IMR-90 (cell line): ENCODE measurements at regions of chr20 and their contacts with region 1.

Region 1: GRCh38 chr20:45971675-45972499 is at the start of gene ZNF335:
- DNase-seq: peak; percentile 96
- ATAC-seq: peak; percentile 89
- H3K4me3 ChIP-seq: peak within 1 kb of the TSS; percentile 67
- H3K27ac ChIP-seq: peak within 1 kb of the TSS; percentile 97
- H3K4me1 ChIP-seq: peaks cover 13% of the 10 kb centered on the region
- H3K27me3 ChIP-seq: no peaks in the 10 kb centered on the region
- CTCF ChIP-seq: peak; percentile 17; the same call in 1 of the 2 replicates
- POLR2A ChIP-seq: peak; percentile 96
- RAD21 ChIP-seq: no peak
- total RNA-seq, gene ZNF335: 11.8 and 12.5 TPM in 2 replicates

Region 2: GRCh38 chr20:45842169-45842812 is 129.6 kb before region 1 on chr20:
- CTCF ChIA-PET with region 1: no interaction called
- POLR2A ChIA-PET with region 1: no interaction called
- dilution Hi-C with region 1: no loop called
- in situ Hi-C with region 1: no loop called
- intact Hi-C with region 1: no loop called
- DNase-seq: peak; percentile 59
- ATAC-seq: peak; percentile 74
- H3K4me3 ChIP-seq: no peak overlapping the region
- H3K27ac ChIP-seq: no peak overlapping the region; the same call in 1 of the 2 replicates
- H3K4me1 ChIP-seq: no peaks in the 10 kb centered on the region
- H3K27me3 ChIP-seq: no peaks in the 10 kb centered on the region
- CTCF ChIP-seq: no peak
- POLR2A ChIP-seq: no peak
- RAD21 ChIP-seq: no peak

Region 3: DNA sequence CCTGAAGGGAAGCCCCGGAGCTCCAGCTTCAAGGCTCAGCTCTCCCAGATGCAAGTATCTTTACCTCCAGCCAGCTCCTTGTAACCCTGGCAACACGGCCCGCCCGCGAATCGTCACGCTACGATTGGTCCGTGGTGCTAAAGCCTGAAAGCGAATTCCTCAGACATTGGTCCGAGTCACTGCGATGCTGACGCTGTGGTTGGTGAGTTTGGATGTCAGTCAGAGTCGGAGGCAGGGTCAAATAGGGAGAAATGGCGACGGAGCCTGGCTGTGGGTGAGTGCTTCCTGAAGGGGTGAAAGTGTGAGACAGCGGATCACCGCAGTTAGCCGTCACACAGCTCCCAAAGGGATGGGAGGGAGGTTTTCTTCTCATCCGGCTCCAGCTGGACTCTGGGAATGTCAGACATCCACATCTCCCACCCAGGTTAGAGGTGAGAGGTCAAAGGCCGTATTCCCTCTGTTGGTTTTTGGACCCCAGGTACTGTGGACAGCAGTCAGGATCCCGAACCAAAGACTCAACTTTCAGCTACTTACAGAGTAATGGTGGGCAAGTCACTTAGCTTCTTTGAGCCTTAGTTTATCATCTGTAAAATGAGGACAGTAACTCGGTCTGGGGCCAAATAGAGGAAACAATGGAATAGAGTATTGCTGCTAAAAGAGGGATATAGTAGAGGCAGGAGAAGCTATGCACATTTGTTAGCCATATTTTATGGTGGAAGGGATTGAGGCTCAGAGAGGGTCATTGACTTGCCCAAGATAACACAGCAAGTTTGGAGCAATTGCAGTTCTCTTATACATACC is 90.7 kb before region 1 on chr20 and contains the start of gene ZSWIM1:
- CTCF ChIA-PET with region 1: no interaction called
- POLR2A ChIA-PET with region 1: no interaction called
- dilution Hi-C with region 1: no loop called
- in situ Hi-C with region 1: no loop called
- intact Hi-C with region 1: no loop called
- DNase-seq: peak; percentile 99
- ATAC-seq: peak; percentile 98
- H3K4me3 ChIP-seq: peak within 1 kb of the TSS; percentile 52
- H3K27ac ChIP-seq: peak within 1 kb of the TSS; percentile 72
- H3K4me1 ChIP-seq: peaks cover 2% of the 10 kb centered on the region; the same call in 1 of the 2 replicates
- H3K27me3 ChIP-seq: no peaks in the 10 kb centered on the region
- CTCF ChIP-seq: no peak
- POLR2A ChIP-seq: peak; percentile 92
- RAD21 ChIP-seq: no peak
- total RNA-seq, gene ZSWIM1: 7.8 and 10.0 TPM in 2 replicates

Region 4: DNA sequence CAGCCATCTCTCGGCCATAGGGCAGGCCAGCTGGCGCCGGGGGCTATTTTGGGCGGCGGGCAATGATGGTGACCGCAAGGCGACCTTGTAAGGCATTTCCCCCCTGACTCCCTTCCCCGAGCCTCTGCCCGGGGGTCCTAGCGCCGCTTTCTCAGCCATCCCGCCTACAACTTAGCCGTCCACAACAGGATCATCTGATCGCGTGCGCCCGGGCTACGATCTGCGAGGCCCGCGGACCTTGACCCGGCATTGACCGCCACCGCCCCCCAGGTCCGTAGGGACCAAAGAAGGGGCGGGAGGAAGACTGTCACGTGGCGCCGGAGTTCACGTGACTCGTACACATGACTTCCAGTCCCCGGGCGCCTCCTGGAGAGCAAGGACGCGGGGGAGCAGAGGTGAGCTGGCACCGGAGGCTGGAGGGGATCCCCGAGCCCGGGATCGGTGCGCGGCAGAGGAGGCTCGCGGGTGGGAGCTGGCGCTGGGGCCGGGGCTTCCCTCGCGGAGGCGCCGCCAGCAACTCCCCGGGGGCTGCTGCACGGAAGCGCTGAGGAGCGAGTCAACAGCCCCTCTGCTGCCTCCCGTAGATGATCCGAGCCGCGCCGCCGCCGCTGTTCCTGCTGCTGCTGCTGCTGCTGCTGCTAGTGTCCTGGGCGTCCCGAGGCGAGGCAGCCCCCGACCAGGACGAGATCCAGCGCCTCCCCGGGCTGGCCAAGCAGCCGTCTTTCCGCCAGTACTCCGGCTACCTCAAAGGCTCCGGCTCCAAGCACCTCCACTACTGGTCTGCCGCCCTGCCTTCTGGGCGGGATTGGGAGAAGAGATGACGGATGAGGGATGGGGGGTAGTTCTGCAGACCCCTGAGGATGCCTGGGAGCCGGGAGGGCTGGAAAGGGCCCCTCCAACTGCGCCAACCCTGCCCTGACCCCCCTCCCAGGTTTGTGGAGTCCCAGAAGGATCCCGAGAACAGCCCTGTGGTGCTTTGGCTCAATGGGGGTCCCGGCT is 80.6 kb before region 1 on chr20 and contains the starts of genes CTSA and NEURL2:
- CTCF ChIA-PET with region 1: no interaction called
- POLR2A ChIA-PET with region 1: no interaction called
- dilution Hi-C with region 1: no loop called
- in situ Hi-C with region 1: no loop called
- intact Hi-C with region 1: loop called (anchors 5 kb)
- DNase-seq: peak; percentile 92
- ATAC-seq: peak; percentile 73
- H3K4me3 ChIP-seq: peak within 1 kb of the TSS; percentile 74
- H3K27ac ChIP-seq: peak within 1 kb of the TSS; percentile 63
- H3K4me1 ChIP-seq: peaks cover 3% of the 10 kb centered on the region; the same call in 1 of the 2 replicates
- H3K27me3 ChIP-seq: no peaks in the 10 kb centered on the region
- CTCF ChIP-seq: no peak
- POLR2A ChIP-seq: no peak; the same call in none of the 2 replicates
- RAD21 ChIP-seq: no peak
- total RNA-seq, gene CTSA: 19.0 and 30.3 TPM in 2 replicates
- total RNA-seq, gene NEURL2: 0.56 and 1.1 TPM in 2 replicates

Region 5: DNA sequence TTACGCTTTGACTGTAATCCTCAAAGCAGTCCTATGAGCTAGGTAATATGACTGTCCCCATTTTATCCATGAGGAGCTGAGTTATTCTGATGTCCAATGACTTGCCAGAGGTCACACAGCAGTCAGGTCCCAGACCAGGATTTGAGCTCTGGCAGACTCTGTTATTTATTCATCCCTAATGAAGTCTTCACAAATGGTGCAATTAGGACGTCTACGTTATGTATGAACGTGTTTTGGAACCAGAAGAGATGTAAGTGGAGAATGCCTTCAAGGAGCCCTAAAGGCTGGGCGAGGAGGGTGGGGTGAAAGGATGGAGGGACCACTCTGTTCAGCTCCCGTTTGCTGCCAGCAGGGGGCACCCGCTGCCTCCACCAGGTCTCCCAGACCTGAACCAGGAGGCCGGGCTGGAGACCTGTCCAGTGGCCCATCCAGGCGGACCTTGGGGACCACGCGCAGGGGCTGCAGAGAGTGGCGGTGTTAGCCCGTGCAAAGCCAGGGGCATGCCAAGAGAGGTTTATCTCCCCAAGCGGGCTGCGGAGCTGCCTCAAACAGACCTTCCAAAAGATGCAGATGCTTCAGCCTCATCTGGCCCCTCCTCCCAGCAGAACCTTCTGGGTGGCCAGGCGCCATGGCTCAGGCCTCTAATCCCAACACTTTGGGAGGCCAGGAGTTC is 15.4 kb after region 1 on chr20:
- CTCF ChIA-PET with region 1: interaction called, 13 read pairs
- POLR2A ChIA-PET with region 1: no interaction called
- dilution Hi-C with region 1: no loop called
- in situ Hi-C with region 1: no loop called
- intact Hi-C with region 1: no loop called
- DNase-seq: peak; percentile 45
- ATAC-seq: peak; percentile 98
- H3K4me3 ChIP-seq: no peak overlapping the region
- H3K27ac ChIP-seq: no peak overlapping the region
- H3K4me1 ChIP-seq: no peaks in the 10 kb centered on the region
- H3K27me3 ChIP-seq: peaks cover 12% of the 10 kb centered on the region
- CTCF ChIP-seq: peak; percentile 77
- POLR2A ChIP-seq: no peak
- RAD21 ChIP-seq: peak; percentile 76

Region 6: GRCh38 chr20:46089417-46090388 is 117.8 kb after region 1 on chr20 and contains the start of gene NCOA5:
- CTCF ChIA-PET with region 1: interaction called, 3 read pairs
- POLR2A ChIA-PET with region 1: no interaction called
- dilution Hi-C with region 1: no loop called
- in situ Hi-C with region 1: no loop called
- intact Hi-C with region 1: loop called (anchors 5 kb)
- DNase-seq: peak; percentile 95
- ATAC-seq: peak; percentile 94
- H3K4me3 ChIP-seq: peak within 1 kb of the TSS; percentile 91
- H3K27ac ChIP-seq: peak within 1 kb of the TSS; percentile 97
- H3K4me1 ChIP-seq: peaks cover 7% of the 10 kb centered on the region
- H3K27me3 ChIP-seq: no peaks in the 10 kb centered on the region
- CTCF ChIP-seq: peak; percentile 44
- POLR2A ChIP-seq: peak; percentile 94
- RAD21 ChIP-seq: no peak
- total RNA-seq, gene NCOA5: 20.6 and 22.5 TPM in 2 replicates

Region 7: DNA sequence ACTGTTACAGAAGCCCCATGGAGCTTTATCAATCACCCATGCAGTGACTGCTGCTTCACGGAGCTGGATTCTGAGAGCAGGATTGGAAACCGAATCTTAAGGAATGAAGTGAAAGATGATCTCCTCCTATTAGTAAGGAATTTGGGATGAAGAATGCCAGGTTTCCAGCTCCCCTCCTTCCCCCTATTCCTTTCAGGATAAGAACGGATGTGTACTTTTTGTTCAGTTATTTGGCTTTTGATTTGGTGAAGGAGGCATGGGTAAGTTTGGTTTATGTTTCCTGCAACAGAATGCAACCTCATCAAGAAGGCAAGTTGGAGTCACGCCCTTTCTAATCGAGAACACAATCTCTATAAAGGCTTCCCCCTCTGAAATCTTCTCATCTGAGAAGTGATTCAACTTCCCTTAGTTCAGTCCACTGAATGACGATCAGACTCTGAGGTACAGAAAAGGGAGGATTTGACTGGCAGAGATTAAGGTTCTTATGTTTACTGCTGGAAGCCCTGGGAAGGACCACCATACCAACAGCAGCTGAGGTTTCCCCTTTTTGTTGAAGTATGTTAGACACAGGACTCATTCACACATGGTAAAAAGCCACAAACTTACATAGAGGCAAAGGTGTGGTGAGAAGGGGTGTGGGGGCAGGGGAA is 429.1 kb after region 1 on chr20:
- CTCF ChIA-PET with region 1: no interaction called
- POLR2A ChIA-PET with region 1: no interaction called
- dilution Hi-C with region 1: no loop called
- in situ Hi-C with region 1: no loop called
- intact Hi-C with region 1: loop called (anchors 5 kb)
- DNase-seq: peak; percentile 46
- ATAC-seq: peak; percentile 50
- H3K4me3 ChIP-seq: no peak overlapping the region
- H3K27ac ChIP-seq: peak overlapping the region; percentile 90
- H3K4me1 ChIP-seq: peaks cover 21% of the 10 kb centered on the region
- H3K27me3 ChIP-seq: no peaks in the 10 kb centered on the region
- CTCF ChIP-seq: no peak
- POLR2A ChIP-seq: 0 out of 2 replicates have a peak, but pooled peaks have one; percentile 4
- RAD21 ChIP-seq: no peak